Dorsolateral prefrontal cortex (tissue), 120 donors: ENCODE measurements at regions of chr9 and their contacts with region 1.

Region 1: DNA sequence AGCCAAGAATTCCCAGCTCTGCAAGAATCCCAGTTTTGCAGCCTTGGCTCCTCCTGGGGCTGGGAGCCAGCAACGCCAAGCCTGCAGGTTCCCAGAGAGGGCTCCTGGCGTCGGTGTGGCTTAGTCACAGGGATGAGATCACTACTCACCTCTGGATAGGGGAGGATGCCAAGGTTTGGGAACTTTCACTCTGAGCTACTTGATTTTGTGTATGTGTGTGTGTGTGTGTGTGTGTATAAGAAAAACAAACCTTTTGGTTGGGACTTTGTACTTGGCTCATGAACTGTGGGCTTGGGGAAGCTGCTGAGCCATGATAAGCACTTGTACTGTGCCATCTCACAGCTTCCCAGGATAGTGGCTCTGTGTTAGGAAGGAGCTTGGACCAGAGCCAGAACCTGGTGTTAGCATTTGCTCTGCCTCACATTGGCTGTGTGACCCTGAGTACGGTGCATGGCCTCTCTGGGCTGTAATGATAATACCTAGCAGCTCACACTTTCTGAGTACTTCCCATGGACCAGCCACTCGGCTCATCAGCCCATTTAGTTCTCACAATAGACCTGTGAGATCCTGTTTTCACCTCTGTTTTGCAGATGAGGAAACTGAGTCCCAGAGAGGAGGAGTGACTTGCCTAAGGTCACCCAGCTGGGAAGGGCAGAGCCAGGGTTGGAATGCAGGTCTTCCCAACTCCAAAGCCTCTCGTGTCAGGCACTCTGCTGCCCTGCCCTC is 41.4 kb upstream of the DAB2IP start:
- DNase-seq: peak in 3 of 10 donors; percentile 34 to 70 (median 47)
- H3K4me3 ChIP-seq: no peak overlapping the region
- H3K27ac ChIP-seq: peak overlapping the region in 11 of 59 donors; percentile 25 to 69 (median 44)
- H3K27me3 ChIP-seq: no peaks in the 10 kb centered on the region
- CTCF ChIP-seq: peak in 1 of 56 donors; percentile 6

Region 2: DNA sequence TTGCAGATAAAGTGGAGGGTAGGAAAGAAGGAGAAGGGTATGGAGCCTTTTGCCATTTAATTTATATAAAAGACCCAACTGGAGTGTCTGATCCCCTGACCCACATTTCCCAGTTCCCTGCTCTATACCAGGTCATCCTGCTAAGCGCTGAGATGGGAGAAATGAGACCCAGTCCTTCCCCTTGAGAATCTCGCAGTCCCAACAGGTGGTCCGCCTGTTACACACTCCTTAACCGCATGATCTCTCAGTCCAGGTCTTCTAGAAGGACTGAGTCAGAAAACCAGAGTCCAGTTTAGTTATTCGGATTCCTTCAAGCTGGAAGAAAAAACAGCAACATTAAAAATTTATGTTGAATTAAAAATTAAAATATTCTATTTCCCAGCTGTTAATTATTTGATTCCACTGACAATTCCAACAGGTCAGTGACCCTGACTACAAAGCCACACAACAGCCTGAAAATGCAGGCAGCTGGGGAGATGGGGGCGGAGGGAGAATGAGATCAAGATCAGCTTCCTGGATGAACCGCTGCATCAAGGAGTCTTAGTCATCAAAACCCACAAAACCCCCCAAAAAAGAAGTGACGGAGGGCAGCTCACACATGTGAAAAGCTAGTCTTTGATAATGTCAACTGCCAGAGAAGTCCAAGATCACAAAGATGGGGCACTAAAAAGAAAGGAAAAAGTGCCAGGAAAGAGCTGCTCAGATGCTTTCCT is 154.3 kb before region 1 on chr9:
- intact Hi-C with region 1: no loop called
- DNase-seq: no peak
- H3K4me3 ChIP-seq: no peak overlapping the region
- H3K27ac ChIP-seq: no peak overlapping the region
- H3K27me3 ChIP-seq: no peaks in the 10 kb centered on the region
- CTCF ChIP-seq: no peak

Region 3: GRCh38 chr9:121566481-121567465 is 43.2 kb before region 1 on chr9:
- intact Hi-C with region 1: loop called in 1 of 2 experiments (anchors 10 kb)
- DNase-seq: peak in 9 of 10 donors; percentile 35 to 86 (median 72)
- H3K4me3 ChIP-seq: peak overlapping the region in 54 of 59 donors; percentile 3 to 64 (median 41)
- H3K27ac ChIP-seq: peak overlapping the region in 56 of 59 donors; percentile 6 to 87 (median 74)
- H3K27me3 ChIP-seq: no peaks in the 10 kb centered on the region
- CTCF ChIP-seq: no peak

Region 4: DNA sequence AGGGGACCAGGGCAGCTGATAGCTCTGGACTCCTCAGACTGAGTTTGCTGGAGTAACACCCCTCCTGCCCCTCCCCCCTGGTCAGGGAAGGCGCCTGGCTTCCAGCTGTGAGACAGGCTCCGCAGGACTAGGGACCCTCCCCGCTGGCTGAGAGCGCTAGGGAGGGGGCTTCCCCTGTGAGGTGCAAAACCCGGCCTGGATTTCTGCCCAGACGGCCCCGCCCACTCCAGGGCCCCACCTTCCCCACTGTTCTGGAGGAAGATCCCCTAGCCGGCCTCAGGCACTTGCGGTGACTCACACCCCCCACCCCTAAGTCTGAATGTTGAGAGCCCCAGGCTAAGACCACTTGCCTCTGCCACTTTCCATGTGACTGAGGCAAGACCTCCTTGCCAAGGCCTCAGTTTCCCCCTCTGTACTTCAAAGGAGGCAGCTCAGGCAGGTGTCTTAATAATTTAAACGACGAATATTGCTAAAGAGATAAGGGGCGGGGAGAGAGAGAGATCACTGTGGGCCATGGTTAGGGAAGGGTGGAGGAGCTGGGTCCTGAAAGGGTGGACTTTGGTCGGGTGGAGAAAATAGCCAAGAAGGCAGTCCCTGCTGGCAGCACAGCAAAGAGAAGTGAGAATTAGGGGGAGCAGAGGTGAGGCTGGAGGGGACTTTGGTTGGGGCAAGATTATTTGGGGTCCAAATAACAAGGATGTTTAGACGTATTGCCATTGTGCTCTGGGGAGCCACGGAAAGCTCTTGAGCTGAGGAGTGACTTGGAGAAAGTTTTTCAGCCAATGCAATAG is 40.4 kb after region 1 on chr9:
- intact Hi-C with region 1: no loop called
- DNase-seq: peak in 1 of 10 donors; percentile 49
- H3K4me3 ChIP-seq: peak overlapping the region in 26 of 59 donors; percentile 53 to 83 (median 70)
- H3K27ac ChIP-seq: peak overlapping the region in 49 of 59 donors; percentile 2 to 87 (median 56)
- H3K27me3 ChIP-seq: no peaks in the 10 kb centered on the region
- CTCF ChIP-seq: no peak